ENCODE measurements at regions of chr2 and their contacts with region 1.

Region 1: DNA sequence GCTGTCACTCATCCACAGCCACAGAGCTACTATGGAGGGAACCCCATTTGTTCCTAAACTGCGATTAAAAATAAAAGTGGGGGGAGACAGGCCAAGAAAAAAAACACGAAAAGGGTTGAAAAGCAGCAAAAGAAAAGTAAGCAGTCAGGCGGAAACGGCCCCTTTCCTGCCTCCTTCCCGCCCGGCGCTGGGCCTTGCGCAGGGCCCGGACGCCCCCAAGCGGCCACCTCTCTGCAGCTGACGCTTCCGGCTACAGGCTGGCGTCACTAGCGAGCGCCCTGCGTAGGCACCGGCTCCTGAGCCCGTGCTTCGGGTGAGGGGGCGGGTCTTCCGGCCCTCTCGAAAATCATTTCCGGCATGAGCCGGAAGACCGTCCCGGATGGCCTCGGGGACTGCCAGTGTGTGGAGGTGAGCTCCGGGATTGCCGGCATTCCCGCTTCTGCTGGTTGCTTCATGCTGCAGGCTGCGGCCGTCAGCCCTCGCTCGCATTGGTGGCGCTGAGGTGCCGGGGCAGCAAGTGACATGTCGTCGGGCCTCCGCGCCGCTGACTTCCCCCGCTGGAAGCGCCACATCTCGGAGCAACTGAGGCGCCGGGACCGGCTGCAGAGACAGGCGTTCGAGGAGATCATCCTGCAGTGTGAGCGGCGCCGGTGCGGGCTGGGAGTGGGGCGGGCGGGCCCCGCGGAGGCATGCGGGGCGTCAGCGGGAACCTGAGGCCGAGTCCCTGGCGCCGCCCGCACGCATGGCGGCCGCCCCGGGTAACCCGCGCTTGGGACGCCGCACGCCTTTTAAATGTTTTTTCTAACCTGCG is at the start of gene ATG16L1:
- DNase-seq: peak; percentile 89 to 98 (median 96)
- H3K4me3 ChIP-seq: peak within 1 kb of the TSS; percentile 50 to 99 (median 92)
- H3K27ac ChIP-seq: peak within 1 kb of the TSS in 58 of 59 donors; percentile 21 to 93 (median 80)
- H3K27me3 ChIP-seq: no peaks in the 10 kb centered on the region
- CTCF ChIP-seq: peak; percentile 87 to 100 (median 98)
- total RNA-seq, gene ATG16L1: 32.3 to 74.5 (median 53.4) TPM

Region 2: DNA sequence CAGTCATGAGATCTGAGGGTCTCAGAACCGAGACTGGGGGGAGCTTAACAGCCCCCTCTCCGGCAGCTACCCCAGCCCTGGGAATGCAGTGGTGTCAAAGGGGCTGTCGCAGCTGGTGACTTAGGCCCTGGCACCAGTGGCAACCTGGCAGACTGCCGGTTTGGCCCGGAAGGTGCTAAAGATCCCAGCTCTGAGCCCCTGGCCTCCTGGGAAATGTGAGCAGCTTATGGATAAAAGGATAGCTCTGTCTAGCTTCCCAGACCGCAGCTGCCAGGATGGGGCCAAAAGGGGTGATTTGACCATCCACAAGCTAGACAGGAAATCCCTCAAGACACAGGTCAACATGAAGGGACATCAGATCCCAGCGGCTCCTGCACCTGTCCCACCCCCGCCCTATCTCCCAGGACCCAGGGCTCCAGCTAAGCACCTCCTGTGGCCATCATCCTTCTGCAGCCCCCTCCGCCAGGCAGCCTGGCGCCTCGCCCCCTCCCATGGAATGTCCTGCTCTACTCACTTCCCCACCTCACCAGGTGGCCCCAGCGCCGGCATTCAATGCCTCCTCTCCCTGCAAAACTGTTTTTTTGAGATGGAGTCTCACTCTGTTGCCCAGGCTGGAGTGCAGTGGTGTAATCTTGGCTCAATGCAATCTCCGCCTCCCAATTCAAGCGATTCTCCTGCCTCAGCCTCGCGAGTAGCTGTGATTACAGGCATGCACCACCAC is 651.3 kb before region 1 on chr2:
- intact Hi-C with region 1: loop called (anchors 5 to 10 kb)
- DNase-seq: no peak
- H3K4me3 ChIP-seq: no peak overlapping the region
- H3K27ac ChIP-seq: no peak overlapping the region
- H3K27me3 ChIP-seq: no peaks in the 10 kb centered on the region
- CTCF ChIP-seq: no peak

Region 3: GRCh38 chr2:232854082-232854481 is 397.4 kb before region 1 on chr2:
- intact Hi-C with region 1: loop called (anchors 2 to 10 kb)
- DNase-seq: no peak
- H3K4me3 ChIP-seq: no peak overlapping the region
- H3K27ac ChIP-seq: peak overlapping the region in 32 of 59 donors; percentile 1 to 72 (median 46)
- H3K27me3 ChIP-seq: no peaks in the 10 kb centered on the region
- CTCF ChIP-seq: no peak

Region 4: GRCh38 chr2:233061591-233062450 is 189.7 kb before region 1 on chr2:
- intact Hi-C with region 1: no loop called
- DNase-seq: peak in 1 of 10 donors; percentile 36
- H3K4me3 ChIP-seq: peak overlapping the region in 54 of 59 donors; percentile 2 to 64 (median 43)
- H3K27ac ChIP-seq: peak overlapping the region in 55 of 59 donors; percentile 1 to 87 (median 68)
- H3K27me3 ChIP-seq: no peaks in the 10 kb centered on the region
- CTCF ChIP-seq: peak in 10 of 56 donors; percentile 5 to 22 (median 14)

Region 5: DNA sequence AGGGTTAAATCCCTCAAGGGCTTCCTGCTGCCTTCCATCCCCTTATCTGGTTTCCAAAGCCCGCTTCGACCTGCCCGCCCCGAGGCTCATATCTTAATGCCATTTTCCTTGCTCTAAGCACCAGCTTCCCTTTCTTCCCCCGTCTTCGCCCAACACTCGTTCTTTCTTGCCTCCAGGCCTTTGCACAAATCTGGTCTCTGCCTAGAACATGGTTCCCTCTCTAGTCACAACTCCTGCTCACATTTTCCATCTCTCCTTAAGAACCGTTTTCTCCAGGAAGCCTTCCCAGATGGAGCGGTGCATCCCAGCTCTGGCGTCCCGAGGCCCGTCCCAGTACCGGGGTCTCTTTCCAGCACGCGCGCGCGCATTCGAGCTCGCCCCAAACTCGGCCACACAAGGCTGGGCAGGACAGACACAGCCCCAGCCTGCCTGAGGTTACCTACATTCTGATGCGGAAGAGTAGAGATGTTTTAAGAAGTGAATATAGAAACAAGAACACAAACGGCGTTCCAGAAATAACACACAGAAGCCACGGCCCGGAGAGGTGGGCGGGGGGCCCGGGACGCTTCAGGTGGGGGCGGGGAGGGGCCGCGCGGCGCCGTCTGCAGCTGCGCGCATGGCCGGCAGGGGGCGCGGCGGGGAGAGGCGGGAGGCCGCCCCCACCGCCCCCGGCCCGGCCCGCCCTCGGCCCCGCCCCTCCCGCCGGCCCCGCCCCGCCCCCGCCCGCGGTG is 102.4 kb after region 1 on chr2 and contains the start of gene DGKD:
- intact Hi-C with region 1: loop called in 1 of 2 experiments (anchors 10 kb)
- DNase-seq: peak in 3 of 10 donors; percentile 41 to 66 (median 64)
- H3K4me3 ChIP-seq: peak within 1 kb of the TSS; percentile 41 to 83 (median 67)
- H3K27ac ChIP-seq: peak within 1 kb of the TSS in 45 of 59 donors; percentile 5 to 91 (median 63)
- H3K27me3 ChIP-seq: no peaks in the 10 kb centered on the region
- CTCF ChIP-seq: peak in 22 of 56 donors; percentile 3 to 46 (median 28)
- total RNA-seq, gene DGKD: 26.8 to 76.7 (median 50.5) TPM

Region 6: GRCh38 chr2:233711312-233712008 is 459.9 kb after region 1 on chr2:
- intact Hi-C with region 1: loop called in 1 of 2 experiments (anchors 5 kb)
- DNase-seq: peak; percentile 50 to 79 (median 68)
- H3K4me3 ChIP-seq: no peak overlapping the region
- H3K27ac ChIP-seq: no peak overlapping the region
- H3K27me3 ChIP-seq: peaks cover 0 to 4% (median 0%) of the 10 kb centered on the region in 45 donors
- CTCF ChIP-seq: peak; percentile 40 to 85 (median 73)

Measured in dorsolateral prefrontal cortex (tissue), 120 donors.